ENCODE measurements at regions of chr20 and their contacts with region 1.

Region 1: DNA sequence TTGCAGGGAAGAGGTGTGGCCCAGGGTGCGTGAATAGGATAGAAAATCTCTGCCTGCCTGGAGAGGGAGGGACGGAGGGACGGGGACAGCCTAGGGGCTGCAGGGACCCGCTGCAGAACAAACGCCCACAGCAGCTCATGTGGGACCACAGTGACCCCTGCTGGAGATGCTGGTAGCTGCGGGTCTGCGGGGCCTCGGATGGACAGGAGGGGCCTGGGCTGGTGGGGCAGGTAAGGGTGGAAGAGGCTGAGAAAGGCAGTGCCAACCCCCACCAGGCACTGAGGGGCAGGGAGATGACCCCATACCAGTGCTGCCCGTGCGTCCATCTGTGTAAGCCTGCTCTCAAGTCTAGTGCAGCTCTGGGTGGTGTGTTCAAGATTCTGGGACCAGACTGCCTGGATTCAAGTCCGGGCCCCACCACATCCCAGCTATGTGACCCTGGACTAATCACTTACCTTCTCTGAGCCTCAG is 39.4 kb downstream of the KIAA1755 start:
- DNase-seq: peak; percentile 78
- H3K4me3 Mint-ChIP-seq: no peak overlapping the region
- H3K27ac Mint-ChIP-seq: no peak overlapping the region
- H3K4me1 Mint-ChIP-seq: no peaks in the 10 kb centered on the region
- H3K27me3 Mint-ChIP-seq: peaks cover 2% of the 10 kb centered on the region

Region 2: DNA sequence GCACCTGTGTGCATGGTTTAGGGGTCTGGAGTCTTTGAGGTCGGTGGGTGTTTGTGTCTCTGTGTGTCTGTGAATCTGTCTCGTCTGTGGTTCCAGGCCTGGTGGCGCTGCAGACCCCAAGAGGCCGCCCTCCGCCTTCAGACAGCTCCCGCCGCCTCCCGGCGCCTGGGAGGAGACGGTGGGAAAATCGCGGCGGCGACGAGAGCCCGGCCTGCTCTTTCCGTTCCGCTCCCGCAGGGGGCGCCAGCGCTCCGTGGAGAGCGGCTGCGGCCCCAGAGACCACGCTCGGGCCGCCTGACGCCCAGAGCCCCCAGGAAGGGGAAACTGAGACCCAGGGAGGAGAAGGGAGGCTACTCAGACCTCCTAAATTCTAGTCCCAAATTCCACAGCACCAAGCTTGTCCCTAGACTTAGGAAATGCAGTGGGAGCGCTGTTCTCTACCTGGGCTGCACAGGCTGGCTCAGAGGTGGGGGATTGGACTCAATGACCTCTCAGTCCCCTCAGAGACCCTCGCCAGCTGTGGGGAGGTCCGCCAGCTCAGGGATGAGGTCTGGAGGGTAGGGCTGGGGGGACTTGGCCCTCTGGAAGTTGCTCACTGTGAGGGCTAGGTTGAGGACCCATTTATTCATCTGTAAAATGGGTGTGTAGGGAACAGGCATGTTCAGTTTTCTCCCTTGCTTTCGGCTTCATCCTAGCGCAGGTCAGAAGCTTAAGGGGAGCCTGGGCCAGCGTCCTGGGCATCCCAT is 656.6 kb before region 1 on chr20:
- CTCF ChIA-PET with region 1: interaction called, 39 read pairs
- POLR2A ChIA-PET with region 1: no interaction called
- intact Hi-C with region 1: loop called (anchors 2 kb)
- DNase-seq: peak; percentile 58
- H3K4me3 Mint-ChIP-seq: no peak overlapping the region
- H3K27ac Mint-ChIP-seq: no peak overlapping the region
- H3K4me1 Mint-ChIP-seq: peaks cover 2% of the 10 kb centered on the region
- H3K27me3 Mint-ChIP-seq: peaks cover 38% of the 10 kb centered on the region

Region 3: DNA sequence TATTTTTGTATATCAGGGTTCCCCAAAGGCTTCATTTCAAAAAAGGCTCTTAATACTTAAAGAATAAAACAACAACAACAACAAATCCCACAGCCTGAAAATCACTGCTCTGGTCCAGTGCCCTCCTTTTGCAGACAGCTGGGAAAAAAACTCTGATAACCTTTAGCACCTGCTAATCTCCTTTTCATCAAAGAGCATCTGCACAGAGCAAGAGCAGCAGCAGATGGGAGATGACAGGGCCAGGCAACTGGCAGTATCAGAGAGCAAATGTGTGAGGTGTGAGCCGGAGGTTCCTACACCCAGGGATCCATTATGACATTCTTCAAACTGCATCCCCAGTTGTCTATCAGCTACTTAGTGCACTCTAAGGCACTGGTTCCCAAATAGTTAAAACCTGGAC is 213.6 kb before region 1 on chr20:
- CTCF ChIA-PET with region 1: no interaction called
- POLR2A ChIA-PET with region 1: no interaction called
- intact Hi-C with region 1: no loop called
- DNase-seq: no peak
- H3K4me3 Mint-ChIP-seq: no peak overlapping the region
- H3K27ac Mint-ChIP-seq: no peak overlapping the region
- H3K4me1 Mint-ChIP-seq: peaks cover 33% of the 10 kb centered on the region
- H3K27me3 Mint-ChIP-seq: no peaks in the 10 kb centered on the region

Region 4: GRCh38 chr20:38050686-38051085 is 170.5 kb before region 1 on chr20:
- CTCF ChIA-PET with region 1: interaction called, 19 read pairs
- POLR2A ChIA-PET with region 1: no interaction called
- intact Hi-C with region 1: no loop called
- DNase-seq: no peak
- H3K4me3 Mint-ChIP-seq: no peak overlapping the region
- H3K27ac Mint-ChIP-seq: peak overlapping the region; percentile 26
- H3K4me1 Mint-ChIP-seq: peaks cover 53% of the 10 kb centered on the region
- H3K27me3 Mint-ChIP-seq: no peaks in the 10 kb centered on the region

Region 5: DNA sequence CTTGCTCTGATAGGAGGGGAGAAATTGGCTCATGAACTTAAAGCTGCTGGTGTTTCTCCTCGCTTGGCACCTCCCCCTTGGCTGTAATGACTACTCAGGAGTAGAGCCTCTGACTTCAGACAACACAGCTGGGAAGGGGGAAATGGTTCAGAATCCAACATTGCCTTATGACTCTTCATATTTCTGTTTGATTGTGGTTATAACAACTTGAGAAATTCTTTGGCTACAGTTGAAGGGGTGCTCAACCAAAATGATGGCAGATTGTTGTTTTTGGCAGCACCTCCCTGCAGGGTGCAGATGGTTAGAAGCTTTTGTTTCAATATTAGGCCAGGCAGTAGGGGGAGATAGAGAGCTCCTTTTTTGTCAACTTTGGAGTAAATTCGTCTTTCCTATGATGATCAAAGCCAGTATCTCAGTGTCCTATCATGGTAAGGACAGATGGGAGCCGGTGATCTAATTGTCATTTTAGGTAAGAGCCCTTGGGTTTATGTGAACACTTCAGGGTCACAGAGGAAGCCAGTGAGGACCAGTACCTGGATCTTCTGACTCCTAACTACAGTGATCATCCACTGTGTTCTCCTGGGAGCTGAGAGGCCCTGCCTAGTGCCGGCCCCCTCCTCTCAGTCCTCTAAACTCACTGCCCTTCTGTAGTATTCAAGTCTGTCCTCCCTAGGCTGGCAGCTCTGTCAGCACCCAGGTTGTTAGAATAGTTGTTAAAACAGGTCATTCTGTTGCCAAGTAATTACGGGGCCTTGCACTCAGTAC is 147.7 kb before region 1 on chr20:
- CTCF ChIA-PET with region 1: interaction called, 119 read pairs
- POLR2A ChIA-PET with region 1: interaction called, 4 read pairs
- intact Hi-C with region 1: loop called (anchors 5 kb)
- DNase-seq: peak; percentile 22
- H3K4me3 Mint-ChIP-seq: no peak overlapping the region
- H3K27ac Mint-ChIP-seq: peak overlapping the region; percentile 2
- H3K4me1 Mint-ChIP-seq: peaks cover 16% of the 10 kb centered on the region
- H3K27me3 Mint-ChIP-seq: no peaks in the 10 kb centered on the region

Region 6: GRCh38 chr20:38201356-38201755 is 19.8 kb before region 1 on chr20:
- CTCF ChIA-PET with region 1: interaction called, 20 read pairs
- POLR2A ChIA-PET with region 1: no interaction called
- intact Hi-C with region 1: no loop called
- DNase-seq: no peak
- H3K4me3 Mint-ChIP-seq: no peak overlapping the region
- H3K27ac Mint-ChIP-seq: no peak overlapping the region
- H3K4me1 Mint-ChIP-seq: no peaks in the 10 kb centered on the region
- H3K27me3 Mint-ChIP-seq: no peaks in the 10 kb centered on the region

Region 7: GRCh38 chr20:38313676-38314075 is 92.5 kb after region 1 on chr20:
- CTCF ChIA-PET with region 1: no interaction called
- POLR2A ChIA-PET with region 1: no interaction called
- intact Hi-C with region 1: no loop called
- DNase-seq: no peak
- H3K4me3 Mint-ChIP-seq: no peak overlapping the region
- H3K27ac Mint-ChIP-seq: no peak overlapping the region
- H3K4me1 Mint-ChIP-seq: no peaks in the 10 kb centered on the region
- H3K27me3 Mint-ChIP-seq: peaks cover 17% of the 10 kb centered on the region

Region 8: DNA sequence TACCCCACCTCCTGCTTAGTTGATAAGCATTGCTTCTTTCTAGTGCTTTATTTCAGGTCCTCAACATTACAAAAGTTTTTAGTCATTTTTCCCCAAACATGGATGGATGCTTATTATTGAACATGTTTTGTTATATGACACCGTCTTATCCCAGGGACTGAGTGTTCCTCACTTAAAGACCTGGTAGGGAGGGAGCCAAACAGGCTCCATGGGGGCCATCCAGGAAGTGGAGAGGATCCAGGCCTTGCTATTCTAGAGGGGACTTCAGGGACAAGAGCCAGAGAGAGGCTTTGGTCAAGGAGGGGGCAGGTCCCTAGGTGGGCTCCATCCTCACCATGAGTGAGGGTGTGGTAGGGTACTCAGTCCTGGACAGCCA is 510.6 kb after region 1 on chr20:
- CTCF ChIA-PET with region 1: no interaction called
- POLR2A ChIA-PET with region 1: no interaction called
- intact Hi-C with region 1: no loop called
- DNase-seq: no peak
- H3K4me3 Mint-ChIP-seq: peak overlapping the region; percentile 58
- H3K27ac Mint-ChIP-seq: no peak overlapping the region
- H3K4me1 Mint-ChIP-seq: peaks cover 38% of the 10 kb centered on the region
- H3K27me3 Mint-ChIP-seq: peaks cover 82% of the 10 kb centered on the region